AG04449 (cell line): ENCODE measurements at regions of chr13 and their contacts with region 1.

Region 1: GRCh38 chr13:98672944-98673545 is 79.4 kb downstream of the SLC15A1 start:
- DNase-seq: peak; percentile 19
- H3K4me3 ChIP-seq: no peak overlapping the region
- CTCF ChIP-seq: peak; percentile 63

Region 2: GRCh38 chr13:98454389-98454881 is 218.6 kb before region 1 on chr13:
- CTCF ChIA-PET with region 1: interaction called, 30 read pairs
- POLR2A ChIA-PET with region 1: no interaction called
- DNase-seq: peak; percentile 76
- H3K4me3 ChIP-seq: no peak overlapping the region
- CTCF ChIP-seq: no peak

Region 3: GRCh38 chr13:98495627-98496478 is 177.2 kb before region 1 on chr13:
- CTCF ChIA-PET with region 1: no interaction called
- POLR2A ChIA-PET with region 1: no interaction called
- DNase-seq: no peak
- H3K4me3 ChIP-seq: no peak overlapping the region
- CTCF ChIP-seq: no peak

Region 4: GRCh38 chr13:98685146-98685545 is 12.1 kb after region 1 on chr13:
- CTCF ChIA-PET with region 1: interaction called, 17 read pairs
- POLR2A ChIA-PET with region 1: no interaction called
- DNase-seq: no peak
- H3K4me3 ChIP-seq: no peak overlapping the region
- CTCF ChIP-seq: no peak